GM18951 (cell line): ENCODE measurements at regions of chr6 and their contacts with region 1.

Region 1: DNA sequence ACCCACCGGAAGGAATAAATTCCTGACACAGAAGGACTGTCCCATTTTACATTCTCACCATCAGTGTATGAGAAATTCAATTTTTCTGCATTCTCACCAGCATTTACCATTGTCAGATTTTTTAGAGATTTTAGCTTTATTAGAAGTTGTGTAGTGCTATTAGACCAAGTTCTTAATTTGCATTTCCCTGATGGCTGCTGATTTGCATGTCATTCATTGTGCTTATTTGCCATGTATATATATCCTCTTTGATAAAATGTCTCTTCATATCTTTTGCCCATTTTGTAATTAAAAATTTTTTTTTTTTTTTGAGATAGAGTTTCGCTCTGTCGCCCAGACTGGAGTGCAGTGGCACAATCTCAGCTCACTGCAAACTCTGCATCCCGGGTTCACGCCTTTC is 9.8 kb upstream of the HLA-DRB5 start:
- POLR2A ChIP-seq: no peak

Region 2: DNA sequence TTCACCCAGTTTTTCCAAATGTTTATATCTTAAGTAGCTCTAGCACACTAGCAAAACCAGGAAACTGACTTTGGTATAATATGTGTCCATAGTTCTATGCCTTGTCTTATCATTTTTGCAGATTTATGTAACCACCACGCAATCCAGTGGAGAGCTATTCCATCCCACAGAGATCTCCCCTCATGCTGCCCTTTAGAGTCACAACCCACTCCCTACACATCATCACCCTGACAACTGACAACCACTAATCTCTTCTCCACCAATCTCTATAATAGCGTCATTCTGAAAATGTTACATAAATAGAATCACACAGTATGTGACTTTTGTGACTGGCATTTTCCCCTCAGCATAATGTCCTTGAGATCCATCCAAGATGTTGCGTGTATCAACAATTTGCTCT is 38.8 kb before region 1 on chr6:
- in situ Hi-C with region 1: loop called (anchors 5 kb)
- POLR2A ChIP-seq: no peak